Activated T-helper 2 cell treated with anti-CD3 and anti-CD28 coated beads, Interferon-gamma antibody, Interleukin-2, Interleukin-4, amounts not matched to agents 10 μg/mL and 5 μg/mL and 100 μg/mL, durations not matched to agents 14 hours and 24 hours and 36 hours (primary cell): ENCODE measurements at regions of chr1 and their contacts with region 1.

Region 1: GRCh38 chr1:235011599-235012435 is 116.8 kb downstream of the TOMM20 start:
- DNase-seq: peak; percentile 97
- H3K4me3 Mint-ChIP-seq: peak overlapping the region; percentile 57
- H3K27ac Mint-ChIP-seq: peak overlapping the region; percentile 100
- H3K4me1 Mint-ChIP-seq: peaks cover 86% of the 10 kb centered on the region
- H3K27me3 Mint-ChIP-seq: no peaks in the 10 kb centered on the region

Region 2: DNA sequence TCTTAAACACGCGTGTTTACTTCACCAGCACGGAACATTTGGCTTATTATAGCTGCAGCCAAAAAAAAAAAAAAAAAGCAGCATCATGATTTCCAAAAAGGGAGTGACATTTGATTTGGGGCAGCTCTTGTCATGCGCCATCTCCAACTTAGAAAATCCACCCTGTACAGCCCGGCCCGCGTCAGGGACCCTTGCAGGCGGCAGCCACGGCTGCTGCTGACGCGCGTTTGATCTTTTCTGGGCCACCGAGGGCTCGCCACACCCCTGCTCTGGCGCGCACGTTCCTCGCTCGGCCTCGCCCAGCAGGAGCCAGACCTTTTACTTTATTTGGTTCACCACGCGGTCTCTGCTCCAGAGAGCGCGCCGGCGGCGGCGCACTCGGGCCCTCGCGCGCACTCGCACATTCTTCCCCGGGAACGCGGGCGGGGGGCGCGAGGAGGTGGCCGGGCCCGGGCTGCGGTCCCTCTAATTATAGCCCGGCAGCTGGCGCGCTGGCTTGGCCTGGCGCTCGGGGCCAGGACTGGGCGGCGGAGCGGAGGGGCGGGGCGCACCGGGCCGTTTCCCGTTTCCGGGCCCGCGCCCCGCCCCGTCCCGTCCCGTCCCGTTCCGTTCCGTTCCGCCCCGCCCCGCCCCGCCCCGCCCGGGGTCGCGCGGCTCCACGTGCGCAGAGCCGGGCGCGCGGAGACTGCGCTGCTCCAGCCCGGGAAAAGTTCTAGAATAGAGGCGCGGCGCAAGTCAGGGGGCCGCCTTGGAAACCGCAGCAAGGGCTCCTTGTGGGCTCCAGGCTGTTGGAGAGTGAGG is 412.0 kb before region 1 on chr1:
- intact Hi-C with region 1: loop called (anchors 2 kb)
- DNase-seq: peak; percentile 70
- H3K4me3 Mint-ChIP-seq: peak overlapping the region; percentile 82
- H3K27ac Mint-ChIP-seq: peak overlapping the region; percentile 92
- H3K4me1 Mint-ChIP-seq: peaks cover 53% of the 10 kb centered on the region
- H3K27me3 Mint-ChIP-seq: no peaks in the 10 kb centered on the region

Region 3: GRCh38 chr1:234772345-234773147 is 239.3 kb before region 1 on chr1:
- intact Hi-C with region 1: loop called (anchors 1 kb)
- DNase-seq: peak; percentile 86
- H3K4me3 Mint-ChIP-seq: peak overlapping the region; percentile 71
- H3K27ac Mint-ChIP-seq: peak overlapping the region; percentile 97
- H3K4me1 Mint-ChIP-seq: peaks cover 58% of the 10 kb centered on the region
- H3K27me3 Mint-ChIP-seq: no peaks in the 10 kb centered on the region

Region 4: DNA sequence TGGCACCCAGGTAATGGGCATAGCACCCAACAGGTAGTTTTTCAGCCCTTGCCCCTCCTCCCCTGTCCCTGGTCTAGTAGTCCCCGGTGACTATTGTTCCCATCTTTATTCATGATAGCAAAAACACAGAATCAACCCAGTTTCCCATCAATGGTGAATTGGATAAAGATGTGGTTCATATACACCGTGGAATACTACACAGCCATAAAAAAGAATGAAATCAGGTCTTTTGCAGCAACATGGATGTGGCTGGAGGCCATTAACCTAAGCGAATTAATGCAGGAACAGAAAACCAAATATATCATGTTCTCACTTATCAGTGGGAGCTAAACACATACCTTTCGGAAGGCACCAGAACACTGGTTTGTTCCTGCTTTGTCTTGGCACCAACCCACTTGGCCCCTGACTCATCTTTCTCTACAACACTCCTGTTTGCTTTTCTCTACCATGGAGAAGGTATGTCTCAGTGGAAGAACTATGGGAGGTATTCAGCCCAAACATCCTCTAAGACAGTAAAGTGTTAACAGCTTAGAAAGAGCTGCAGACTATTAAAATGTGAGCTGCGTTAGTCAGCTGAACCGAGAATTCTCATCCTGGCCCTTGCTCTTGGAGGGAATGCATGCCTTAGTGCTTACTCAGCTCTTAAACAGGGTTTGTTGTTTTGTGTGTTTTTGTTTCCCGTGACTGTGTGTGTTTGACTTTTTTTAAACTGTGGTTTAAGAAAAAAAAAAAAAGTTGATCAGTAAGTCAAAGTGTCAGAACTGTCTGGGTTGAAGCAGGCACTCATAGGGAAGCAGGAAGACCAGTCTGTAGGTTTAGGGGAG is 86.2 kb before region 1 on chr1:
- intact Hi-C with region 1: loop called (anchors 1 kb)
- DNase-seq: no peak
- H3K4me3 Mint-ChIP-seq: peak overlapping the region; percentile 72
- H3K27ac Mint-ChIP-seq: peak overlapping the region; percentile 98
- H3K4me1 Mint-ChIP-seq: peaks cover 58% of the 10 kb centered on the region
- H3K27me3 Mint-ChIP-seq: no peaks in the 10 kb centered on the region

Region 5: GRCh38 chr1:234978397-234979295 is 33.2 kb before region 1 on chr1:
- intact Hi-C with region 1: loop called (anchors 1 kb)
- DNase-seq: no peak
- H3K4me3 Mint-ChIP-seq: peak overlapping the region; percentile 91
- H3K27ac Mint-ChIP-seq: peak overlapping the region; percentile 97
- H3K4me1 Mint-ChIP-seq: peaks cover 82% of the 10 kb centered on the region
- H3K27me3 Mint-ChIP-seq: no peaks in the 10 kb centered on the region

Region 6: GRCh38 chr1:235067263-235068172 is 55.7 kb after region 1 on chr1:
- intact Hi-C with region 1: loop called (anchors 1 kb)
- DNase-seq: no peak
- H3K4me3 Mint-ChIP-seq: no peak overlapping the region
- H3K27ac Mint-ChIP-seq: peak overlapping the region; percentile 60
- H3K4me1 Mint-ChIP-seq: peaks cover 39% of the 10 kb centered on the region
- H3K27me3 Mint-ChIP-seq: no peaks in the 10 kb centered on the region

Region 7: GRCh38 chr1:235867903-235868469 is 856.2 kb after region 1 on chr1:
- intact Hi-C with region 1: no loop called
- DNase-seq: peak; percentile 26
- H3K4me3 Mint-ChIP-seq: peak overlapping the region; percentile 98
- H3K27ac Mint-ChIP-seq: peak overlapping the region; percentile 99
- H3K4me1 Mint-ChIP-seq: peaks cover 54% of the 10 kb centered on the region
- H3K27me3 Mint-ChIP-seq: no peaks in the 10 kb centered on the region